ENCODE measurements at regions of chr21 and their contacts with region 1.

Region 1: GRCh38 chr21:31873696-31874599 is 1.1 kb downstream of the HUNK start:
- DNase-seq: no peak
- H3K4me3 ChIP-seq: peak overlapping the region; percentile 41 to 54
- H3K27ac ChIP-seq: peak overlapping the region; percentile 66
- H3K4me1 ChIP-seq: no peaks in the 10 kb centered on the region
- H3K27me3 ChIP-seq: no peaks in the 10 kb centered on the region
- CTCF ChIP-seq: peak in 1 of 3 experiments; percentile 18
- POLR2A ChIP-seq: no peak

Region 2: DNA sequence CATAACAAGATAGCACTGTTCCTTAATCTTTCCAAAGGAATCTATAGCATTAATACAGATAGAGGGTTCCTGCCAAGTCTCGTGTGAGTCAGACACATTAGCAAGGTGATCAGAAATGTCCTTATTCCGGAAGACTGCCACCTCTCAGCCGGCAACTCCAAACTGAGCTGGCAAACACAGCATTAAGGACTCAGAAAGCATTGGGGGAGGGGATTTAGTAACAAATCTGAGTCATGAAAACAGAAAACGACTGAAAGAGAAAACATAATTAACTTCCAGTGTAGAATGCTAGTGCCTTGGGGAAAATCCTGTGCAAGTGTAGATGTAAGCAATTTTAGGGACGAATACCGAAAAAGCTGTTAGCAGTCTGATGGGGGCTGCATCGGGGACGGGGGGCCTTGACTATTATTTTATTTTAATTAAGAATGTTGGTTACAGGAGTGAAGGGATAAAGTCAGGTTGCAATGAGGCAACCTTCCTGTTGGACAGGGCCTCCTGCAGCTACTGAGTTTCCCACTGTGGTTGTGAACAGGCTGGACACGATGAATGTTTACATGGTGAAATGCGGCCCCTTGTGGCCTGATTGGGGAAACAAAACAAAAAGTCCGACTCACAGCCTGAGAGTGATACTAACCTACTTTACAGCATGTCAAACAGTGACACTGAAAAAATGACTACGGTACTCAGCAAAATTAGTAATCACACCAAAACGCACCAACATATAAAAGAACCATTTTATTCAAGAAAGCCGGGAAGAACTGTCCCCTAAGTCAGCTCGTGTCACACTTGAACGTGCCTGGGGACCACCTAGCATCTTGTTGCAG is 384.2 kb after region 1 on chr21:
- intact Hi-C with region 1: loop called (anchors 5 kb)
- DNase-seq: no peak
- H3K4me3 ChIP-seq: no peak overlapping the region
- H3K27ac ChIP-seq: no peak overlapping the region
- H3K4me1 ChIP-seq: peaks cover 20% of the 10 kb centered on the region
- H3K27me3 ChIP-seq: no peaks in the 10 kb centered on the region
- CTCF ChIP-seq: peak; percentile 59 to 83 (median 78)
- POLR2A ChIP-seq: no peak

Region 3: GRCh38 chr21:32597205-32597604 is 723.3 kb after region 1 on chr21:
- intact Hi-C with region 1: loop called (anchors 10 kb)
- DNase-seq: no peak
- H3K4me3 ChIP-seq: no peak overlapping the region
- H3K27ac ChIP-seq: no peak overlapping the region
- H3K4me1 ChIP-seq: no peaks in the 10 kb centered on the region
- H3K27me3 ChIP-seq: no peaks in the 10 kb centered on the region
- CTCF ChIP-seq: no peak
- POLR2A ChIP-seq: no peak

Measured in vagina (tissue), 2 donors.